BJ (cell line): ENCODE measurements at regions of chr7 and their contacts with region 1.

Region 1: GRCh38 chr7:130929896-130930659 is 196.1 kb upstream of the KLF14 start:
- DNase-seq: no peak
- H3K4me3 ChIP-seq: no peak overlapping the region
- H3K27me3 ChIP-seq: no peaks in the 10 kb centered on the region
- CTCF ChIP-seq: no peak

Region 2: GRCh38 chr7:130961128-130961601 is 31.1 kb after region 1 on chr7:
- CTCF ChIA-PET with region 1: no interaction called
- POLR2A ChIA-PET with region 1: interaction called, 10 read pairs
- DNase-seq: no peak
- H3K4me3 ChIP-seq: no peak overlapping the region
- H3K27me3 ChIP-seq: no peaks in the 10 kb centered on the region
- CTCF ChIP-seq: no peak